SK-N-SH (cell line): ENCODE measurements at regions of chr13 and their contacts with region 1.

Region 1: DNA sequence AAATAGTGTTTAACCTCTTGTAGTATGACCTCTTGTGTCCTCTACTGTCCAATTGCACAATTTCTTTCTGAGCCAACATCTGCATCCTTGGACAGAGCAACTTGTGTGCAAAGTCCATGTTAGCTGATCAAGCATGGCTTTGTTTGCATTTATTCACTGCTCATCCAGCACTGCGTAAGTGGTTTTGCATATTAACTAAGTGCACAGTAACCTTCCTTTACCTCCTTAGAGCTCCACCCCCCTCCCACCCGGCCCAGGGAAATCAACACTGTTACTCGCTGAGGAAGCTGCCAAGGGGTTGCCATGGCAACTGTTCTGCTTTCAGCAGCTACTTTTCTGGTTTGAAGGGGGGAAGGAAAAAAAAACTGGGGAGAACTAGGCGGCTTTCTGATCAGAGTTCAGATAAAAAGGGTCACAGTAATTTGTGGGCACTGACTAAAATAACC is 153.5 kb upstream of the KLF12 start:
- DNase-seq: peak; percentile 56
- H3K4me3 ChIP-seq: peak overlapping the region; percentile 33 to 41
- H3K27ac ChIP-seq: peak overlapping the region; percentile 51 to 98; a peak in 3 of 4 replicates
- H3K4me1 ChIP-seq: peaks cover 33 to 42% of the 10 kb centered on the region in 2 experiments
- H3K27me3 ChIP-seq: no peaks in the 10 kb centered on the region
- CTCF ChIP-seq: no peak
- EP300 ChIP-seq: no peak
- RAD21 ChIP-seq: no peak

Region 2: GRCh38 chr13:73146705-73147104 is 1141.0 kb before region 1 on chr13:
- CTCF ChIA-PET with region 1: no interaction called
- POLR2A ChIA-PET with region 1: no interaction called
- DNase-seq: no peak
- H3K4me3 ChIP-seq: no peak overlapping the region
- H3K27ac ChIP-seq: no peak overlapping the region
- H3K4me1 ChIP-seq: peaks cover 2 to 5% of the 10 kb centered on the region in 2 experiments; a peak in 1 of 4 replicates
- H3K27me3 ChIP-seq: no peaks in the 10 kb centered on the region
- CTCF ChIP-seq: no peak
- EP300 ChIP-seq: no peak
- RAD21 ChIP-seq: no peak

Region 3: GRCh38 chr13:73754727-73755292 is 532.9 kb before region 1 on chr13:
- CTCF ChIA-PET with region 1: interaction called, 26 read pairs
- POLR2A ChIA-PET with region 1: no interaction called
- DNase-seq: peak; percentile 30
- H3K4me3 ChIP-seq: no peak overlapping the region; a peak in 1 of 4 replicates
- H3K27ac ChIP-seq: peak overlapping the region in 1 of 2 experiments; percentile 14; a peak in 1 of 4 replicates
- H3K4me1 ChIP-seq: peaks cover 4 to 20% of the 10 kb centered on the region in 2 experiments; a peak in 3 of 4 replicates
- H3K27me3 ChIP-seq: no peaks in the 10 kb centered on the region
- CTCF ChIP-seq: peak; percentile 75
- EP300 ChIP-seq: no peak
- RAD21 ChIP-seq: peak; percentile 91

Region 4: DNA sequence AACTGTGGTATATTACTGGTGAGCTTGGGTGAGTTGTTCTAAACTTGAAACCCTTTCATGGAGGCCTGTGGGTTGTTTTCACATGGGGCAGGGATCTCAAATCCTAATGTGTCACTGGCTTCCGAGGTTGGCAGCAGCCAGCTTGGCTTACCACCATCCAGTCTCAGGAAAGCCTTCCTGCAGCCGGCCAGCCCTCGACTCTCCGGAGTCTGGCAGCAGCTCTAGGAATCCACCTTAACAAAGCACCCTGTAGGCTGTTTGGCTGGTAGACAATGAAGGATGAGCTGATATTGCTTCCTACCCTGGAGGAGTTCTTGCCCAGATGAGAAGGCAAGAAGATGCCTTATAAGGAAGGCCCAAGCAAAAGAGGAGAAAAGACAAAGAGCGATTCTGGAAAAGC is 341.9 kb before region 1 on chr13:
- CTCF ChIA-PET with region 1: interaction called, 15 read pairs
- POLR2A ChIA-PET with region 1: no interaction called
- DNase-seq: peak; percentile 41
- H3K4me3 ChIP-seq: no peak overlapping the region
- H3K27ac ChIP-seq: peak overlapping the region; percentile 17 to 86; a peak in 3 of 4 replicates
- H3K4me1 ChIP-seq: peaks cover 6 to 33% of the 10 kb centered on the region in 2 experiments; a peak in 3 of 4 replicates
- H3K27me3 ChIP-seq: no peaks in the 10 kb centered on the region
- CTCF ChIP-seq: no peak
- EP300 ChIP-seq: no peak
- RAD21 ChIP-seq: peak; percentile 14; the same call in 1 of the 2 replicates

Region 5: GRCh38 chr13:74142257-74142656 is 145.5 kb before region 1 on chr13:
- CTCF ChIA-PET with region 1: interaction called, 37 read pairs
- POLR2A ChIA-PET with region 1: no interaction called
- DNase-seq: no peak
- H3K4me3 ChIP-seq: no peak overlapping the region
- H3K27ac ChIP-seq: no peak overlapping the region
- H3K4me1 ChIP-seq: peaks cover 0 to 13% of the 10 kb centered on the region in 2 experiments; a peak in 1 of 4 replicates
- H3K27me3 ChIP-seq: no peaks in the 10 kb centered on the region
- CTCF ChIP-seq: no peak
- EP300 ChIP-seq: no peak
- RAD21 ChIP-seq: no peak

Region 6: GRCh38 chr13:74306496-74306895 is 18.7 kb after region 1 on chr13:
- CTCF ChIA-PET with region 1: interaction called, 15 read pairs
- POLR2A ChIA-PET with region 1: interaction called, 3 read pairs
- DNase-seq: peak; percentile 20
- H3K4me3 ChIP-seq: no peak overlapping the region
- H3K27ac ChIP-seq: peak overlapping the region in 1 of 2 experiments; percentile 85; a peak in 2 of 4 replicates
- H3K4me1 ChIP-seq: peaks cover 0 to 18% of the 10 kb centered on the region in 2 experiments; a peak in 3 of 4 replicates
- H3K27me3 ChIP-seq: no peaks in the 10 kb centered on the region
- CTCF ChIP-seq: no peak
- EP300 ChIP-seq: peak in 1 of 2 experiments; percentile 35; a peak in 1 of 4 replicates
- RAD21 ChIP-seq: peak; percentile 33

Region 7: DNA sequence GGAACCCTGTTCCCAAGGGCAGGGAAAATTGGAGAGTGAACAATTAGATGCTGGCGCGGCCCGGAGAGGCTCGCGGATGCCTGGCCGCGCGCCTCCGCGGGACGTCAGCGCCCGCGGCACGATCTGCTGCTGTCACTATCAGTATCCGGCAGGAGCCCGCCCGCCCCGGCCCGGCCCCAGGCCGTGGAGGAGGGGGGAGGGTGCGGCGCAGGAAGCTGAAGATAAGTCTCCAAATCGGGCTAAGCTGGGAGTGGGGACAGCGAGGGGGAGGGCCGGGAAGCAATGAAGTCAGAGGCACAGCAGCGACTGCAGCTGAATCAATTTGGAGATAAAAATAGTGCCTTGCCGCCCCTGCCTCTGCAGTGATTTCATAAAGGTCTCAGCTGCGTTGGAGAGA is 288.0 kb after region 1 on chr13:
- CTCF ChIA-PET with region 1: interaction called, 3 read pairs
- POLR2A ChIA-PET with region 1: interaction called, 12 read pairs
- DNase-seq: peak; percentile 90
- H3K4me3 ChIP-seq: peak overlapping the region; percentile 36 to 64
- H3K27ac ChIP-seq: peak overlapping the region in 1 of 2 experiments; percentile 99; a peak in 2 of 4 replicates
- H3K4me1 ChIP-seq: peaks cover 0 to 15% of the 10 kb centered on the region in 2 experiments; a peak in 2 of 4 replicates
- H3K27me3 ChIP-seq: no peaks in the 10 kb centered on the region; the same call in 1 of the 2 replicates
- CTCF ChIP-seq: no peak
- EP300 ChIP-seq: peak in 1 of 2 experiments; percentile 90; a peak in 2 of 4 replicates
- RAD21 ChIP-seq: peak; percentile 32

Region 8: DNA sequence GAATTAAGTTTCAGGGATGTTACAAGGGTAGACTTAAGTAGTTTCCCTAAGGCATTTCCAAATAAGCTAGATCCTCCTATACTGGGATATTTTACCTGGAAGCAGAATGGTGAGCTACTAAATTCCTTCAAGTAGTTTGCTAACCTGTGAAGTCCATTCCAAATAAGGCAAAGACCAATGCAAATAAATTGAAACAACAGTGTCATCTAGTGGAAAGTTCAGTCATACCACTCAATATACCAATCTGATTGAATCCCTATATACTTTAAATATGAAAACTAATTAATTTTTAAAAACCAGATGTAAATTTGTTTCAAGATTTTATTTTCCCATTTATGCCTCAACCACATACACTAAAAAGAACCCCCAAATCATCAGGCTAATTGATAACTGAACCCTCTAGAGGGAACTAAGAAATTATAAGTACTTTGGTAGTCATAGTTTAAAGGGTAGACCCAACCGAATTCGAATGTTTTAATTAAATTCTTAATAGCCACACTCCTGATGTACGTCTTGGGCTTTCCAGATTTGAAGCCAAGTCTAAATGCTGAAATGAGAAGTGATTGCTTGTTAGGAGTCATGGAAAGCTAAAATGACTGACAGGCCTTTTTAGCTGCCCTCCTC is 970.5 kb after region 1 on chr13:
- CTCF ChIA-PET with region 1: interaction called, 24 read pairs
- POLR2A ChIA-PET with region 1: no interaction called
- DNase-seq: peak; percentile 36
- H3K4me3 ChIP-seq: no peak overlapping the region
- H3K27ac ChIP-seq: no peak overlapping the region
- H3K4me1 ChIP-seq: no peaks in the 10 kb centered on the region; a peak in 1 of 4 replicates
- H3K27me3 ChIP-seq: peaks cover 5% of the 10 kb centered on the region; the same call in 1 of the 2 replicates
- CTCF ChIP-seq: peak; percentile 86
- EP300 ChIP-seq: no peak
- RAD21 ChIP-seq: peak; percentile 92